ENCODE measurements at regions of chr1 and their contacts with region 1.

Region 1: GRCh38 chr1:176559878-176560277 is 96.9 kb downstream of the PAPPA2 start:
- DNase-seq: peak in 1 of 2 donors; percentile 15
- ATAC-seq: peak; percentile 60

Region 2: GRCh38 chr1:176691251-176692228 is 131.7 kb after region 1 on chr1:
- intact Hi-C with region 1: loop called in 1 of 2 experiments (anchors 5 kb)
- DNase-seq: peak; percentile 40 to 51
- ATAC-seq: peak; percentile 87

Region 3: DNA sequence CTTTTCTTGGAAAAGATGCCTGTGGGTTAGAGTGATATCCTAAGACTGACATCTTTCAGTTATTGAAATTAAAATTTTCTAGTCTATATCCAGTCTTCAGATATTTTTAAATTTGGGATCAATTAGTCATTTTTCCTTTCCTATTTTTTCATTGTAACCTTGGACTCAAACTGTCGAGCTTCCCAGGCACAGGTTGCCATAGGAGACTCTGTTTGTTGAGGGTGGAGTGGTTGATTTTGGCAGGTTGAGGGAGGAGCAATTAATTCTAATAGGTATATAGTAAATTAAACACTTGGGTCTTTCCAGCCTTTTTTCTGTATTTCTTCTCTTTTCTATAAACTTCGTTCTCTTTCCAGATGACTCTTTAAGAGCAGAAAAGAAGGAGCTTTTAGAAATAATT is 277.8 kb after region 1 on chr1:
- intact Hi-C with region 1: loop called in 1 of 2 experiments (anchors 5 kb)
- DNase-seq: no peak
- ATAC-seq: no peak

Region 4: GRCh38 chr1:176880954-176881595 is 321.2 kb after region 1 on chr1:
- intact Hi-C with region 1: loop called in 1 of 2 experiments (anchors 5 kb)
- DNase-seq: peak; percentile 33 to 78
- ATAC-seq: peak; percentile 76

Measured in left colon (tissue), 2 donors.